Endothelial cell of umbilical vein (primary cell): ENCODE measurements at regions of chr17 and their contacts with region 1.

Region 1: GRCh38 chr17:38351412-38352222 is at the start of gene SOCS7:
- DNase-seq: peak; percentile 89
- H3K4me3 ChIP-seq: peak within 1 kb of the TSS; percentile 66 to 69 (median 69)
- H3K27ac ChIP-seq: peak within 1 kb of the TSS; percentile 21
- H3K4me1 ChIP-seq: peaks cover 8% of the 10 kb centered on the region
- H3K27me3 ChIP-seq: no peaks in the 10 kb centered on the region
- CTCF ChIP-seq: no peak
- POLR2A ChIP-seq: peak; percentile 64
- total RNA-seq, gene SOCS7: 10.4 and 11.7 TPM in 2 replicates

Region 2: GRCh38 chr17:38322091-38322779 is 29.4 kb before region 1 on chr17:
- CTCF ChIA-PET with region 1: interaction called, 21 read pairs
- POLR2A ChIA-PET with region 1: interaction called, 3 read pairs
- dilution Hi-C with region 1: no loop called
- intact Hi-C with region 1: no loop called
- DNase-seq: no peak
- H3K4me3 ChIP-seq: no peak overlapping the region
- H3K27ac ChIP-seq: no peak overlapping the region
- H3K4me1 ChIP-seq: peaks cover 5% of the 10 kb centered on the region
- H3K27me3 ChIP-seq: no peaks in the 10 kb centered on the region
- CTCF ChIP-seq: peak; percentile 15 to 70
- POLR2A ChIP-seq: no peak

Region 3: GRCh38 chr17:38333635-38334295 is 17.9 kb before region 1 on chr17:
- CTCF ChIA-PET with region 1: interaction called, 63 read pairs
- POLR2A ChIA-PET with region 1: no interaction called
- dilution Hi-C with region 1: no loop called
- intact Hi-C with region 1: no loop called
- DNase-seq: peak; percentile 33
- H3K4me3 ChIP-seq: no peak overlapping the region
- H3K27ac ChIP-seq: no peak overlapping the region
- H3K4me1 ChIP-seq: no peaks in the 10 kb centered on the region
- H3K27me3 ChIP-seq: no peaks in the 10 kb centered on the region
- CTCF ChIP-seq: peak; percentile 73 to 75
- POLR2A ChIP-seq: no peak

Region 4: DNA sequence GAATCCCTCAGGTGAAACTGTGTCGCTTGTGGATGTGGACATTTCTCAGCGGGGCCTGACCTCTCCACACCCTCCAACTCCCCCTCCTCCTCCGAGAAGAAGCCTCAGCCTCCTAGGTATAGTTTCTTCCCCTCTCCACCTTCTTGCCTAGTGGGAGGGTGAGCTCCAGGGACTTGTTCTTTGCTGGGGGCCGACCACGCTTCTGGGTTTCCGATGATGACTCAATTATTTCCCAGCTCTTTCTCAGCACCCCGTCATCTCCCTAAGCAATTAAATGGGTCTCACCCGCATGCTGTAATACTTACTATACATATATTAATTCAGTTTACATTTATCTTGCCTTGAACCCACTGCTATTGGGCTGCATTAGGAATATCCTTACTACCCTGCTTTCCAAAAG is 13.1 kb after region 1 on chr17:
- CTCF ChIA-PET with region 1: interaction called, 32 read pairs
- POLR2A ChIA-PET with region 1: no interaction called
- dilution Hi-C with region 1: no loop called
- intact Hi-C with region 1: no loop called
- DNase-seq: no peak
- H3K4me3 ChIP-seq: no peak overlapping the region
- H3K27ac ChIP-seq: no peak overlapping the region
- H3K4me1 ChIP-seq: no peaks in the 10 kb centered on the region
- H3K27me3 ChIP-seq: no peaks in the 10 kb centered on the region
- CTCF ChIP-seq: no peak
- POLR2A ChIP-seq: no peak

Region 5: GRCh38 chr17:38403491-38403890 is 51.9 kb after region 1 on chr17:
- CTCF ChIA-PET with region 1: interaction called, 365 read pairs
- POLR2A ChIA-PET with region 1: no interaction called
- dilution Hi-C with region 1: no loop called
- intact Hi-C with region 1: no loop called
- DNase-seq: no peak
- H3K4me3 ChIP-seq: no peak overlapping the region
- H3K27ac ChIP-seq: no peak overlapping the region
- H3K4me1 ChIP-seq: no peaks in the 10 kb centered on the region
- H3K27me3 ChIP-seq: no peaks in the 10 kb centered on the region
- CTCF ChIP-seq: no peak
- POLR2A ChIP-seq: no peak

Region 6: GRCh38 chr17:38485146-38485468 is 133.5 kb after region 1 on chr17:
- CTCF ChIA-PET with region 1: interaction called, 3 read pairs
- POLR2A ChIA-PET with region 1: no interaction called
- dilution Hi-C with region 1: no loop called
- intact Hi-C with region 1: loop called (anchors 5 kb)
- DNase-seq: no peak
- H3K4me3 ChIP-seq: no peak overlapping the region
- H3K27ac ChIP-seq: no peak overlapping the region
- H3K4me1 ChIP-seq: peaks cover 2% of the 10 kb centered on the region
- H3K27me3 ChIP-seq: no peaks in the 10 kb centered on the region
- CTCF ChIP-seq: no peak
- POLR2A ChIP-seq: no peak

Region 7: GRCh38 chr17:38533866-38534497 is 182.4 kb after region 1 on chr17:
- CTCF ChIA-PET with region 1: interaction called, 12 read pairs
- POLR2A ChIA-PET with region 1: no interaction called
- dilution Hi-C with region 1: no loop called
- intact Hi-C with region 1: no loop called
- DNase-seq: no peak
- H3K4me3 ChIP-seq: no peak overlapping the region
- H3K27ac ChIP-seq: no peak overlapping the region
- H3K4me1 ChIP-seq: no peaks in the 10 kb centered on the region
- H3K27me3 ChIP-seq: peaks cover 0 to 3% of the 10 kb centered on the region in 2 experiments
- CTCF ChIP-seq: no peak
- POLR2A ChIP-seq: no peak